ENCODE measurements at regions of chr1 and their contacts with region 1.

Region 1: GRCh38 chr1:96236156-96236739 is 485.3 kb upstream of the PTBP2 start:
- DNase-seq: peak; percentile 14
- CTCF ChIP-seq: peak; percentile 61

Region 2: DNA sequence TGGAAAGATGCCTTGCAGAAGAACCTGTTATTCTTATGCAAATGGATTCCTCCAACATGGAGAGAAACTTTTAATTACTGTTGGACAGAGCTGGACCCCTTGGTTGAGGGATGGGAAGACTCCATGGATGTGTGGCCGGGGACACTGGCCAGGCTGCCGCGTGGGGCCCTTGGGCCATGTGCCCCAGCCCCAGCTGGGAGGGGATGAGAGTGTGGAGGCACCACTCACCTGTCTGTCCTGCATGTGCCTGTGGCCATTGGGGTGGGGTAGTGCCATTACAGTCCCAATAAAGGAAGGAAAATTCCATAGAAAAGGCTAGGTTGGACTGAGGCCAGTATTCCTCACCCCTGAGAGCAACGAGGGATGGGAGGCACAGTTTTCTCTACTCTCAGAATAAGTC is 79.1 kb before region 1 on chr1:
- in situ Hi-C with region 1: no loop called
- DNase-seq: no peak
- CTCF ChIP-seq: no peak

Region 3: DNA sequence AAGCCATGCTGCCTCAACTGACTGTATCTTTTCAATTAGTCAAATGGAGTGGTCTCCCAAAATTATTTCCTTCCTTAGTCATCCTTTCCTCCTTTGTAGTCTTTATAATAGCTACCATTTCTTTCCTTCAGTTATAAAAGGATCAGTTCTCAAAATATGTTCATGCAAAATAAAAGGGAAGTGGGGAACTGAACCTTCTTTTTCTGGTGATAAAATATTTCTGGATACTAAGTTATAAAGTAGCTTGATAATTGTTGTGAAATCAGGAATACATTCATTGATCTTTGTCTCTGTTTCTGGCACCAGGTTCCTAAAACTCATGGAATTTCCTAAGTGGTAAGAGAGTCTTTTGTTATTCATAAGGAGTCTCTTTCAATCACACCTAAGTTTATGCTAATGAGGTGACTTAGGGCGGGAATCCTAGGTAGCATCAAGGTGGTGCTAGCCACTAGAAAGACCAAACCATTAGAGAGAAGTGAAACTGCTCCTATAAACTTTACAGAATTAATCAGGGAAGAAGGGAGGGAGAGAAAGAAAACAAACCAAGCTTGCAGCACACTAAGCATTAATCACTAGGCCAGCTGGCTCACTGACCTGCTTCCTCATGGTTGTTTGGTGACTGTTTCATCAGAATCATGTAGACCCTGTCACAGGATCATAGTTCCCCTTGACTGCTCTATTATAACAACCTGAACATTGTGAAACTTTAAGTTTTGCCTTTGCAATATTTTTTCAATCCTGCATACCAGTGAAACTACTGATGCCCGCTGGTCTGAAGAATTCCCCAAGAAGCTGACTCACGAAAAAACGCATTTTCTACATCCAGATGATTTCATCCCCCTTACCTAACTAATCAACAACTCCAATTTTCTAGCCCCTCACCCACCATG is 323.7 kb after region 1 on chr1:
- in situ Hi-C with region 1: no loop called
- DNase-seq: no peak
- CTCF ChIP-seq: no peak

Region 4: GRCh38 chr1:96730574-96731298 is 494.5 kb after region 1 on chr1:
- in situ Hi-C with region 1: no loop called
- DNase-seq: no peak
- CTCF ChIP-seq: no peak

Region 5: GRCh38 chr1:96845464-96845863 is 609.2 kb after region 1 on chr1:
- in situ Hi-C with region 1: loop called (anchors 25 kb)
- DNase-seq: peak; percentile 18
- CTCF ChIP-seq: peak; percentile 89

Measured in GM13977 (cell line).